Colonic mucosa (tissue), 4 donors: ENCODE measurements at regions of chr9 and their contacts with region 1.

Region 1: GRCh38 chr9:99173570-99174504 is 47.9 kb downstream of the ALG2 start:
- DNase-seq: no peak
- H3K4me3 ChIP-seq: no peak overlapping the region
- H3K27ac ChIP-seq: no peak overlapping the region
- H3K4me1 ChIP-seq: no peaks in the 10 kb centered on the region
- H3K27me3 ChIP-seq: no peaks in the 10 kb centered on the region
- CTCF ChIP-seq: no peak

Region 2: DNA sequence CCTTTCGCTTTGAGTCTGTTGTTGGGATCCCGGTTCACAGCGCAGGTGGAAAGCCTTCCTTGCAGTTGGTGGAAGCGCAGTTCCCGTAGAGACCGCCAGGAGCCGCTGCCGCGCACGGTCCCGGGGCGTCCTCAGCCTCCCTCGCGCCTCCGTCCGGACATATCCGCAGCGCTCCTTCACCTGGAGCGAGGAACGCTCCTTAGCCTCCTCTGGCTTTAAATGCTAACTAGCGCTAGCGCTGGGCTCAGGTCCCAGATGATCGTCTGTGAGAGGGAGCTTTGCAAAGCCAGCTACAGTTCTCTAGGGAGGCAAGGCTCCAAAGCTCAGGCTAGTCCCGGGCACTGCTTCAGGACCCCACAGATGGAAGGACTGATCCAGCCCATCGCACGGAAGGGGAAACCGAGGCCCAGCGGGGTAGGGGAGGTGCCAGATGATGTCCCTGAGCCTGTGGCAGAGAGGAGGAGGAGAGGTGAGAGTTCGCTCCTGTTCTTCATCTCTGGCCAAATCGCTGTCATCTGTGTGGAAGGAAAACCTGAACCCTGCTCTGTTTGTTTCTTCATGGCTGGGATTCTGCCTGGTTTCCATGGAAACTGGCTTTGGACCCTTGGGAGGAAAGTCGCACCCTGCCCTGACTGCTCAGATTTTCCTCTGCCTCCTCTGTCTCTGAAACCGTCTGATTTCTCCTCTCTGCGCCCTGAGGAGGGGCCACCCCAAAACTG is 198.7 kb before region 1 on chr9:
- intact Hi-C with region 1: no loop called
- DNase-seq: peak; percentile 89
- H3K4me3 ChIP-seq: no peak overlapping the region
- H3K27ac ChIP-seq: no peak overlapping the region
- H3K4me1 ChIP-seq: peaks cover 3% of the 10 kb centered on the region
- H3K27me3 ChIP-seq: no peaks in the 10 kb centered on the region
- CTCF ChIP-seq: peak; percentile 97

Region 3: DNA sequence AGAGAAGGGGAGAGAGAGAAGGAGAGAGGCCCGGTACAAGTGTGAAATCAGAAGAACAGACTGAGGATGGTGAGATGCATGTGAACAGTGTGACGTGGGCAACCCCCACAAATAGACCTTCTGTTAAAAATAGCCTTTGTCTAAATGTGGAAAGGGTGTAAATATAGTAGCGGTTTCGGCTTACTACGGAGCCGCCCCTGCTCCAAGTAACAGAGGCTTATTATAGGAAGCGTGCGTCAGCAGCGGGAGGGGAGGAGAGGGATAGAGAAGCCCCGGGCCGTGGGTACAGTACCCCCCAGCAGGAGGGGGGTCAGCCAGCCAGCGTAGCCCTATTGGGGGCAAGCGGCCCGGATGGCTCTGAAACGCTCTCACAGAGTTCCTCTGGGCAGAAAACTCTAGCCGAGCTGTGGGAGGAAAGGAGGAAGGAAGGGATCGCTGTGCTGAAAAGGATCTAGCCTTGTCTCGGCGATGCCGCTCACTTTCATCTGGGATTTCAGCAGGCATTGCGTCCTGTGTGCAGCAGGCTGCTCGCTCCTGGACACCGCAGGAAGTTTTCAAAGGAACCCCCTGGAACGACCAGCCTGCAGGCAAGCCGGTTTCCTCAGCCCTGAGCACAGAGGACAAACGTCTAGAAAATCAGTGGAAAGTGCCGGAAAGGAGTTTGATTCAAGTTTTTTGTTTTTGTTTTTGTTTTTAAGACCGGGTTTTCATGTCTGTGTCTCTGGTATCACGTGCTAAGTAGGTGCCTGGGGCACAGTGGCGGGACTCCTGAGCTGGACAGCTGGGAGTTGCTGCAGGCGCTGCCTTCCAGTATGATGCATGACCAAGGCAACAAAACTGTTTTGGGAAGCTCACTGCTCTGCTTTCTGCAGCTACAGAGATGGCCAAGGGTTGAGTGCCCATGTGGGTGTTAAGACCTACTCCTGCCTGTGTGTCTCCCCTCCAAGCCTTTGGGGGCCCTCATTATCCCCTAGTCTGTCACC is 194.8 kb after region 1 on chr9:
- intact Hi-C with region 1: loop called (anchors 10 kb)
- DNase-seq: no peak
- H3K4me3 ChIP-seq: peak overlapping the region; percentile 9
- H3K27ac ChIP-seq: no peak overlapping the region
- H3K4me1 ChIP-seq: no peaks in the 10 kb centered on the region
- H3K27me3 ChIP-seq: no peaks in the 10 kb centered on the region
- CTCF ChIP-seq: no peak